PC-3 (cell line): ENCODE measurements at regions of chr5 and their contacts with region 1.

Region 1: DNA sequence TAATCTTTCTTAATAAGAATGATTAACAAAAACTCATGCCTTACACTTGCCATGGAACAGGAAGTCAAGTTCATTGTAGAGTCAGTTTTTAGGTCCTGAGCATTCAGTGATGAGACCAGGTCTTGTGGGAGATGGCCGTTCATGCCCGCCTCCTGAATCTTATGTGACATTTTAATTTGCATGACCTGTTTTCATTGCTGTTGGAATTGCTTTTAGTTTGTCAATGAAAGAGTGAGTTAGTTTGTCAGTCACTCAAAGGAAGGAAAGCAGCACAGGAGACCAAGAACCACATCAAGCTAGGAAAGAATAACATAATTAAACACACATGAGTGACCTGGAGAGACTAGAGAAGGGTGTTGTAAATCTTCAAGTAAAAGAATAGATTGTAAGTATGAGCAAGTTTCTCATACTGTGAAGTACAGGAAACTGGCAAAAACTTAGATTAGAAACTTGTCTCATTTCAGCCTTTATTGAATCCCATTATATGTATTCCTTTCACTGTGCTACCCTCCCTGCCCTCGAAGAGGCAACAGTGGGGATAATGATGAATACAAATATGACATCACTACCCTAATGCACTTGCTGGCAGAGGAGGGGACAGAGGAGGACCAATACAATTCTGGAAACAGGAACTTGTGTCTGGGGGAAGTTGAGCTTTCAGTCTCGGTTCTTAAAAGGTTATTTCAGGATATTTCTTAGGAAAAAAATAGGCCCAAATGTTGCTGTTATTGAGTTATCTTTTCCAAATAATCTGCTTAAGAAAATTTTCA is 64.3 kb upstream of the C6 start:
- DNase-seq: no peak
- ATAC-seq: no peak
- H3K4me3 ChIP-seq: no peak overlapping the region
- H3K27ac ChIP-seq: no peak overlapping the region
- H3K4me1 ChIP-seq: peaks cover 15% of the 10 kb centered on the region
- H3K27me3 ChIP-seq: no peaks in the 10 kb centered on the region
- CTCF ChIP-seq: no peak

Region 2: GRCh38 chr5:41234475-41234874 is 43.2 kb before region 1 on chr5:
- CTCF ChIA-PET with region 1: no interaction called
- POLR2A ChIA-PET with region 1: no interaction called
- intact Hi-C with region 1: no loop called
- DNase-seq: no peak
- ATAC-seq: peak; percentile 64
- H3K4me3 ChIP-seq: no peak overlapping the region
- H3K27ac ChIP-seq: no peak overlapping the region
- H3K4me1 ChIP-seq: no peaks in the 10 kb centered on the region
- H3K27me3 ChIP-seq: no peaks in the 10 kb centered on the region
- CTCF ChIP-seq: no peak

Region 3: DNA sequence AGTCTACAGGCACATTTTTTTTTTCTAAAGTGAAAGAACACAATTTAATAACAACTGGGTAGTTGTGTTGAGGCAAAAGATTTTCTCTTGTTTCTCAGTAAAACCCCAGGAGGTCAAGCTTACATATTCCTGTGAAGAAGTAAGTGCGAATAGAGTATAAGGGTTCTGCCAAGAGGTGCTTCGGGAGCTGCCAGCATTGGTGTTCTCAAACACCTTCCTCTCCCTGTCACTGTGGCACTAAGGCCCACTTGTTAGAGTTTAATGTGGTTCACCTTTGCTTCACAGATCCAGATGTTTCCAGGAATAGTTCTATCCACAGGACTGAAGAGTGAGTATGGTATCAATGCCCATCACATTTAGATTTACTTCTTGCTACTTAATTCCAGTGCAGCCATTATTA is 27.4 kb after region 1 on chr5:
- CTCF ChIA-PET with region 1: no interaction called
- POLR2A ChIA-PET with region 1: no interaction called
- intact Hi-C with region 1: loop called (anchors 2 kb)
- DNase-seq: no peak
- ATAC-seq: no peak
- H3K4me3 ChIP-seq: no peak overlapping the region
- H3K27ac ChIP-seq: no peak overlapping the region
- H3K4me1 ChIP-seq: no peaks in the 10 kb centered on the region
- H3K27me3 ChIP-seq: no peaks in the 10 kb centered on the region
- CTCF ChIP-seq: no peak

Region 4: GRCh38 chr5:41433552-41434181 is 156.0 kb after region 1 on chr5:
- CTCF ChIA-PET with region 1: no interaction called
- POLR2A ChIA-PET with region 1: no interaction called
- intact Hi-C with region 1: no loop called
- DNase-seq: peak; percentile 49
- ATAC-seq: peak; percentile 40
- H3K4me3 ChIP-seq: no peak overlapping the region
- H3K27ac ChIP-seq: no peak overlapping the region
- H3K4me1 ChIP-seq: no peaks in the 10 kb centered on the region
- H3K27me3 ChIP-seq: no peaks in the 10 kb centered on the region
- CTCF ChIP-seq: peak; percentile 87